Activated CD8-positive, alpha-beta T cell treated with anti-CD3 and anti-CD28 coated beads, Interleukin-2, amount 10 ng/mL, durations not matched to agents 7 days and 5 days (primary cell): ENCODE measurements at regions of chr3 and their contacts with region 1.

Region 1: DNA sequence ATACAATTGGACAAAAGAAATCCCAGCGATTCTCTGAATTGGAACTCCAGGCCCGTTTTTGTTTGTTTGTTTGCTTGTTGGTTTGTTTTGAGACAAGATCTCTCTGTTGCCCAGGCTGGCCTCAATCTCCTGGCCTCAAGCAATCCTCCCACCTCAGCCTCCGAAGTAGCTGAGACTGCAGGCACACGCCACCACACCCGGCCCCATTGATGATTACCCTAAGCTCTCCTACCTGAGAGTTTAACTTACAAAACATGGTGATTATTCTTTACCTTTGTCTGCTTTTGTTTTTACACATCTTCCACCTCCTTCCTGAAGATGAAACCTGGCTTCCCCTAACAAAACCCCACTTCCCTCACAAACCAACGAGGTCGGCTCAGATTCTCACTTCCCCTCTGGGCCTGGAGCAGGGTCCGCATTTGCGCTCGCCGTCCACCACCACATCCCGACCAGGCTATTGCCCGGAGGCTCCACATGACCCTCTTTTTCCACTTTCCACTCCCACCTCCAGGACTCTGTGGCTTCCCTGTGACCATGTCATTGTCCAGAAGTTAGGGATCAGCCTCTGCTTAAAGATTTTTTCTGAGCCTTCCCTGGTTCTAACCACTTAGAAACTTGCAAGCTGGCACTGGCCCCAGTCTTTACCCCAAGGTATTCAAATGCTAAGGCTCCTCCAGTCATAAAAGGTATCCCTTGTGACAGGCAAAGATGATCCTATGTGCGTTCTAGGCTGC is 14.8 kb downstream of the KLHL6 start:
- DNase-seq: no peak
- ATAC-seq: peak; percentile 31
- H3K4me3 Mint-ChIP-seq: peak overlapping the region; percentile 50
- H3K27ac Mint-ChIP-seq: peak overlapping the region; percentile 73
- H3K4me1 Mint-ChIP-seq: peaks cover 71% of the 10 kb centered on the region
- H3K27me3 Mint-ChIP-seq: no peaks in the 10 kb centered on the region

Region 2: GRCh38 chr3:183411216-183411922 is 129.3 kb before region 1 on chr3:
- CTCF ChIA-PET with region 1: no interaction called
- POLR2A ChIA-PET with region 1: no interaction called
- DNase-seq: no peak
- ATAC-seq: no peak
- H3K4me3 Mint-ChIP-seq: no peak overlapping the region
- H3K27ac Mint-ChIP-seq: no peak overlapping the region
- H3K4me1 Mint-ChIP-seq: no peaks in the 10 kb centered on the region
- H3K27me3 Mint-ChIP-seq: peaks cover 10% of the 10 kb centered on the region

Region 3: GRCh38 chr3:183481582-183481981 is 59.1 kb before region 1 on chr3:
- CTCF ChIA-PET with region 1: interaction called, 13 read pairs
- POLR2A ChIA-PET with region 1: no interaction called
- DNase-seq: no peak
- ATAC-seq: no peak
- H3K4me3 Mint-ChIP-seq: no peak overlapping the region
- H3K27ac Mint-ChIP-seq: no peak overlapping the region
- H3K4me1 Mint-ChIP-seq: peaks cover 3% of the 10 kb centered on the region
- H3K27me3 Mint-ChIP-seq: no peaks in the 10 kb centered on the region

Region 4: GRCh38 chr3:183551930-183552329 is 11.3 kb after region 1 on chr3:
- CTCF ChIA-PET with region 1: interaction called, 19 read pairs
- POLR2A ChIA-PET with region 1: interaction called, 5 read pairs
- DNase-seq: no peak
- ATAC-seq: no peak
- H3K4me3 Mint-ChIP-seq: peak overlapping the region; percentile 13
- H3K27ac Mint-ChIP-seq: no peak overlapping the region
- H3K4me1 Mint-ChIP-seq: peaks cover 62% of the 10 kb centered on the region
- H3K27me3 Mint-ChIP-seq: no peaks in the 10 kb centered on the region

Region 5: DNA sequence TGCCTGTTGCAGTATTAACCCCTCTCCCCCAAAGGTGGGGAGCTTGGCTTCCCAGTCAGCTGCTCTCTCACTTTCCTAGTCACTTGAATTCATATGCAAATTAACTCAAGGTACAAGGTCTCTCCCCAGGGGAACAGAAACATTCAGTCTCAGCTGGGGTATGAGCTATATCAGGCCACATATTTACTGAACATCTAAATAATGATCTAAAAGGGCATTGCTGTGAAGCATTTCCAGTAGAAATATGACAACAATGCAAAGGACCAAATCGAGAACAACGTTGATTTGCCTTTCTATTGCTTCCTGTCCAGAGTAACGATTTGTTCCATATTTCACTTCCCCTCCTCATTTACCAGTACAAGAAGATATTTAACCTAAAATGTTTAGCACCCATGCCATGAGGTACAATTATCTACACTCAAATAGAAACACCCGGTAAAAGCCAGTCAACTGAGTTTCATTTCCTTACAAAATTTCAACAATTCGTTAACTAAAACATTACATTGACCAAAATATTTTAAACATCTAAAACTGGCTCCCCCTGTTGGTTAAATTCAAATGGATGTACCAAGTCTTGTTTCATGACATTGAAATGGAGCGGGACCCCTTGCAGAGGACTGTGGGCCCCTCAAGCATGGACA is 51.3 kb after region 1 on chr3:
- CTCF ChIA-PET with region 1: interaction called, 13 read pairs
- POLR2A ChIA-PET with region 1: no interaction called
- DNase-seq: no peak
- ATAC-seq: no peak
- H3K4me3 Mint-ChIP-seq: peak overlapping the region; percentile 44
- H3K27ac Mint-ChIP-seq: peak overlapping the region; percentile 58
- H3K4me1 Mint-ChIP-seq: peaks cover 20% of the 10 kb centered on the region
- H3K27me3 Mint-ChIP-seq: no peaks in the 10 kb centered on the region